Activated CD4-positive, alpha-beta T cell treated with anti-CD3 and anti-CD28 coated beads for 36 hours (primary cell): ENCODE measurements at regions of chr7 and their contacts with region 1.

Region 1: GRCh38 chr7:151759591-151760042 is 117.3 kb downstream of the PRKAG2 start:
- DNase-seq: peak; percentile 75
- ATAC-seq: peak; percentile 40
- H3K4me3 Mint-ChIP-seq: no peak overlapping the region
- H3K27ac Mint-ChIP-seq: no peak overlapping the region
- H3K4me1 Mint-ChIP-seq: peaks cover 25% of the 10 kb centered on the region
- H3K27me3 Mint-ChIP-seq: no peaks in the 10 kb centered on the region

Region 2: DNA sequence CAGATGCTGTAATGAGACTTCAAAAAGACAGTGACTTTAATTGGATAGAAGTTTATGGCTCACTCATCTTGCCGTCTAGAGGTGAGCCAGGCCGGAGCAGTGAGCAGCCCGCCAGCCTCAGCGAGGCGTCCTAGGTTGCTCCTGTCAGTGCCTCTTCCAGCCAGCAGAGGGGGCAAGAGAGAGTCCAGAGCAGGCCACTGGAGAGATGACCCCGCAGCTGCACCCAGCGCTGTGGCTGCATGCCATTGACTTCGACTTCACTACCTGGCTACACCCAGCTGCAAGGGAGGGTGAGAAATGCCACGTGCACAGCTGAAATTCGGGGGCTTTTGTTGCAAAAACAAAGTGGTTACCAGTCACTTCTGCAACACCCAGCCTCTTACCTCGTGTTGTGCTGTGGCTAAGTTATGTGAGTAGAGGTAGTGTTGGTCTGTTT is 391.5 kb before region 1 on chr7:
- CTCF ChIA-PET with region 1: interaction called, 5 read pairs
- POLR2A ChIA-PET with region 1: no interaction called
- intact Hi-C with region 1: loop called (anchors 1 to 10 kb)
- DNase-seq: peak; percentile 88
- ATAC-seq: peak; percentile 100
- H3K4me3 Mint-ChIP-seq: no peak overlapping the region
- H3K27ac Mint-ChIP-seq: no peak overlapping the region
- H3K4me1 Mint-ChIP-seq: peaks cover 10% of the 10 kb centered on the region
- H3K27me3 Mint-ChIP-seq: no peaks in the 10 kb centered on the region

Region 3: GRCh38 chr7:151570366-151570915 is 189.2 kb before region 1 on chr7:
- CTCF ChIA-PET with region 1: interaction called, 6 read pairs
- POLR2A ChIA-PET with region 1: no interaction called
- intact Hi-C with region 1: loop called (anchors 1 kb)
- DNase-seq: no peak
- ATAC-seq: no peak
- H3K4me3 Mint-ChIP-seq: no peak overlapping the region
- H3K27ac Mint-ChIP-seq: no peak overlapping the region
- H3K4me1 Mint-ChIP-seq: no peaks in the 10 kb centered on the region
- H3K27me3 Mint-ChIP-seq: no peaks in the 10 kb centered on the region

Region 4: DNA sequence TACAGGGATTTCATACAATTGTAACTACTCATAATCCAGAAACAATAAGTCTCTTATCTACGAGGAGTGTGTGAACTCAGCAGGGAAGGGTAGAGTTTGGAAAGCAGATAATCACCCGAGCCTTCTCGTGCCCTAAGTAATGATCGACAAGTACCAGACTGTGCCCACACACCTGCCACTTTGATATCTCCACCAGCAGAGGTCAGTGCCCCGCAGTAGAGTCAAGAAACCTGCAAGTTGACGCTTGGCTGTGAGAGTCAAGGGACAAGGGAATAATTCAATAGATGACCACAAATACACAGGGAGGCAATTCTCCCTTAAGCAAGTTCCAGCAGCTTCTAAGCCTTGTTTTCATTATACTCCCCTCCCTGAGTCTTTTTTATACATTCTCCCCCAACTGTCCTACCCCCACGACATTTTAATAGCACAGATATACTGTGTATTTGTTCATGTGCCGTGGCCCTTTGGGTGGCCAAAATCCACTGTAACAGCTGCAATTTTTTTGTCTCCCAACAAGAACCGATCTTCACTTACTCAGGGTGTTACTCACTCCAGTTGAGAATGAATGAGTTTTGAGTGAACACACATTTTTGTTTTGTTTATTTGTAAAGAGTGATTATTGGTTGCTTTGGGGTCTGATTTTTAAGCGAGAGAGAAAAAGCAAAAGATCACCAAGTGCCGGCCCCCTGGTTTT is 133.0 kb before region 1 on chr7:
- CTCF ChIA-PET with region 1: interaction called, 25 read pairs
- POLR2A ChIA-PET with region 1: no interaction called
- intact Hi-C with region 1: loop called (anchors 1 kb)
- DNase-seq: peak; percentile 63
- ATAC-seq: peak; percentile 51
- H3K4me3 Mint-ChIP-seq: no peak overlapping the region
- H3K27ac Mint-ChIP-seq: no peak overlapping the region
- H3K4me1 Mint-ChIP-seq: peaks cover 28% of the 10 kb centered on the region
- H3K27me3 Mint-ChIP-seq: no peaks in the 10 kb centered on the region